HepG2 (cell line): ENCODE measurements at regions of chr13 and their contacts with region 1.

Region 1: DNA sequence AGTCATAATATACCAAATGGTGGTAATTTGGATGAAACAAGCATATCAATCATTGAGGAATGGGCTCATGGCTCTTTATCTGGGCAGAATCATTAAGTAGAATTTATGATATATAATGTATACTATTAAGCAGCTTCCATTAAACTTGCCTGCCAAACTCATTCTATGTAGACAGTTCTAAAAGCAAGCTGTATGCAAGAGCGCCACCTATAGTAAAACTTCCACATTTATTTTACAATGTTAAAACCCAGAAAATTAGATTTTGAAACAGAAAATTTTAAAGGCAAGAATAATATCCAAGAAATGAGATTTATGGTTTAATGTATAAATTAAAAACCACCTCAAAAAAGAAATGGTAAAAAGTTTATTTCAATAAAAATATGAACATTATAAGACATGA is 161.5 kb downstream of the MZT1 start:
- DNase-seq: peak; percentile 29
- ATAC-seq: peak; percentile 67; the same call in 2 of the 3 replicates
- H3K4me3 ChIP-seq: no peak overlapping the region
- H3K27ac ChIP-seq: no peak overlapping the region
- H3K4me1 ChIP-seq: no peaks in the 10 kb centered on the region
- H3K27me3 ChIP-seq: no peaks in the 10 kb centered on the region
- CTCF ChIP-seq: peak; percentile 61
- EP300 ChIP-seq: no peak
- POLR2A ChIP-seq: no peak
- RAD21 ChIP-seq: no peak

Region 2: DNA sequence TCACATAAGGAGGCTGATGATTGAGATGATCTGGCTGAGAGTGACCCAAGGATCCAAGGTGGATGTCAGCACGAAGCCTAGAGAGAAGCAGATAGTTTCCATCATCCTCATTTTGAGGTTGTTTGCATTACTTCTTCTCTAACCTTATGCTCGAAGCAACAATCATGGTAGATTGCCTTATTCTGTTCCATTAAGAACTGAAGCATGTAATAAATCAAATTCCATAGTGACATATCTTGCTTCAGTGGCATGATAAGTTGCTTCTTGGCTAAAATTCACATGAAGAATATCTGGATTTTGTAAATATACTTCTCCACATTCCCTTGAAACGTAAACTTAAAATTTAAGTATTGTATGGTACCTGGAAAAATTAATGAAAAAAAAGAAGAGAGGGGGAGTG is 321.1 kb before region 1 on chr13:
- CTCF ChIA-PET with region 1: no interaction called
- POLR2A ChIA-PET with region 1: no interaction called
- in situ Hi-C with region 1: no loop called
- intact Hi-C with region 1: loop called (anchors 5 kb)
- DNase-seq: no peak
- ATAC-seq: no peak
- H3K4me3 ChIP-seq: no peak overlapping the region
- H3K27ac ChIP-seq: no peak overlapping the region
- H3K4me1 ChIP-seq: no peaks in the 10 kb centered on the region
- H3K27me3 ChIP-seq: no peaks in the 10 kb centered on the region
- CTCF ChIP-seq: no peak
- EP300 ChIP-seq: no peak
- POLR2A ChIP-seq: no peak
- RAD21 ChIP-seq: no peak

Region 3: GRCh38 chr13:72341904-72342303 is 224.0 kb before region 1 on chr13:
- CTCF ChIA-PET with region 1: no interaction called
- POLR2A ChIA-PET with region 1: no interaction called
- in situ Hi-C with region 1: loop called (anchors 25 kb)
- intact Hi-C with region 1: loop called (anchors 1 kb)
- DNase-seq: peak; percentile 10
- ATAC-seq: peak; percentile 79
- H3K4me3 ChIP-seq: no peak overlapping the region
- H3K27ac ChIP-seq: no peak overlapping the region
- H3K4me1 ChIP-seq: peaks cover 5% of the 10 kb centered on the region; the same call in 1 of the 2 replicates
- H3K27me3 ChIP-seq: no peaks in the 10 kb centered on the region
- CTCF ChIP-seq: peak; percentile 45
- EP300 ChIP-seq: no peak
- POLR2A ChIP-seq: no peak
- RAD21 ChIP-seq: no peak

Region 4: GRCh38 chr13:72444999-72445398 is 120.9 kb before region 1 on chr13:
- CTCF ChIA-PET with region 1: no interaction called
- POLR2A ChIA-PET with region 1: no interaction called
- in situ Hi-C with region 1: no loop called
- intact Hi-C with region 1: loop called (anchors 5 kb)
- DNase-seq: no peak
- ATAC-seq: no peak
- H3K4me3 ChIP-seq: no peak overlapping the region
- H3K27ac ChIP-seq: no peak overlapping the region
- H3K4me1 ChIP-seq: no peaks in the 10 kb centered on the region
- H3K27me3 ChIP-seq: no peaks in the 10 kb centered on the region; a peak in 1 of 5 replicates
- CTCF ChIP-seq: no peak
- EP300 ChIP-seq: no peak
- POLR2A ChIP-seq: no peak
- RAD21 ChIP-seq: no peak

Region 5: DNA sequence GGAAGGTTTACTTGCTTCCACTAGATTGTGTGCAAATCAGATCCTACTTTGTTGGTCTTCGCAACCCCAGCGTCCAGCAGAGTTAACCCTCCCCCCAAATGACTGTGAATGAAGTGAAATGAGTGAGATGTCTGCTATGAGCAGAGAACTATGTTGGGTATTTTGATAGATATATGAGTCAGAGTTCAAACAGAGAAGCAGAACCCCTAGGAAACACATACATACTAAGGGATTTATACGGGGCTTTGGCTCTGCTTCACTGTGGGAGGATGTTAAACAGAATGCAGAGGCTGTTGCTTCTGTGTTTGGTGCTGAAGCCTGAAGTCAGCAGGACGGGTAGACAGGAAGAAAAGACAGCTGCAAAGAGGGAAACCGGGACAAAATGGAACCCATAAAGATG is 35.4 kb before region 1 on chr13:
- CTCF ChIA-PET with region 1: no interaction called
- POLR2A ChIA-PET with region 1: no interaction called
- in situ Hi-C with region 1: no loop called
- intact Hi-C with region 1: no loop called
- DNase-seq: no peak
- ATAC-seq: no peak; the same call in 2 of the 3 replicates
- H3K4me3 ChIP-seq: no peak overlapping the region
- H3K27ac ChIP-seq: no peak overlapping the region
- H3K4me1 ChIP-seq: peaks cover 21% of the 10 kb centered on the region
- H3K27me3 ChIP-seq: no peaks in the 10 kb centered on the region
- CTCF ChIP-seq: no peak
- EP300 ChIP-seq: no peak
- POLR2A ChIP-seq: no peak
- RAD21 ChIP-seq: no peak

Region 6: GRCh38 chr13:72552731-72553130 is 13.2 kb before region 1 on chr13:
- CTCF ChIA-PET with region 1: no interaction called
- POLR2A ChIA-PET with region 1: no interaction called
- in situ Hi-C with region 1: no loop called
- intact Hi-C with region 1: no loop called
- DNase-seq: no peak
- ATAC-seq: no peak
- H3K4me3 ChIP-seq: no peak overlapping the region
- H3K27ac ChIP-seq: no peak overlapping the region
- H3K4me1 ChIP-seq: peaks cover 44% of the 10 kb centered on the region
- H3K27me3 ChIP-seq: no peaks in the 10 kb centered on the region
- CTCF ChIP-seq: no peak
- EP300 ChIP-seq: no peak
- POLR2A ChIP-seq: no peak
- RAD21 ChIP-seq: no peak